CD8-positive, alpha-beta T cell (primary cell): ENCODE measurements at regions of chr6 and their contacts with region 1.

Region 1: DNA sequence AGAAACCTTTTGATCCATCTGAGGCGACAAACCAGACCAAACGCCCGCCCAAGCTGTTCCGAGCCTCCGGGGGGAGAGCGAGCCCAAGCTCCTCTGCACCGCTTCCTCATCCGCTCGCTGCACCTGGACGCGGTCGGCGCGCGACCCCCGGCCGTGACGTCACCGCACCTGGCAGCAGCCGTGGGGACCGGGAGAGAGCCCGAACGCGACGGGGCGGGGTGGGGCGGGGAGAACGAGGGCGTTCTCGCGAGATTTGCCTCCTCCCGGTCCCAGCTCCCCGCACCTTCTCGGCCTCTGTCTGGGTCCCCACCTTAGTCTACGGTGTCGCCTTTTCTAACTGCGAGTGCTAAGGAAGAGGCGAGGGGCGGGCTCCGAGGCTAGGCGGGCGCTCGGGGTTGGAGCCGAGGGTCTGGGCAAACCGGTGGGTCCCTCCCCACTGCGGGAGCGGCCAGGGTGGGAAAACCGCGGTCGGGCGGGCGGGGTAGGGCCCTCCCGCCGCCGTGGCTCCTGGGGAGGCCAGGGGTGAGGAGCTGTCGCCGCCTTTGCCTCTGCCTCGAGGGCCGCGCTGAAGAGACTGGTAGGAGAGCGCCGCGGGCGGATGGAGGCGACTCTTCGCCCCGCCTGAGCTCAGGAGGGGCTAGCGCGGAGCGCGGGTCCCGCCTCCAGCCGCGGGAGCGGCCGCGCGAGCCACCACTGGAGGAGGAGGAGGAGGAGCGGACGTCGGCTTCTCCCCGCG is at the start of gene CD2AP:
- DNase-seq: peak; percentile 86 to 97 (median 94)
- ATAC-seq: peak; percentile 82
- H3K4me3 ChIP-seq: peak within 1 kb of the TSS; percentile 68 to 76
- H3K4me3 Mint-ChIP-seq: peak within 1 kb of the TSS; percentile 97
- H3K27ac ChIP-seq: peak within 1 kb of the TSS; percentile 89 to 94
- H3K27ac Mint-ChIP-seq: peak within 1 kb of the TSS; percentile 96
- H3K4me1 ChIP-seq: peaks cover 24% of the 10 kb centered on the region
- H3K4me1 Mint-ChIP-seq: peaks cover 46% of the 10 kb centered on the region
- H3K27me3 ChIP-seq: no peaks in the 10 kb centered on the region
- H3K27me3 Mint-ChIP-seq: no peaks in the 10 kb centered on the region
- CTCF ChIP-seq: no peak
- total RNA-seq, gene CD2AP: 43.0 to 51.1 TPM

Region 2: DNA sequence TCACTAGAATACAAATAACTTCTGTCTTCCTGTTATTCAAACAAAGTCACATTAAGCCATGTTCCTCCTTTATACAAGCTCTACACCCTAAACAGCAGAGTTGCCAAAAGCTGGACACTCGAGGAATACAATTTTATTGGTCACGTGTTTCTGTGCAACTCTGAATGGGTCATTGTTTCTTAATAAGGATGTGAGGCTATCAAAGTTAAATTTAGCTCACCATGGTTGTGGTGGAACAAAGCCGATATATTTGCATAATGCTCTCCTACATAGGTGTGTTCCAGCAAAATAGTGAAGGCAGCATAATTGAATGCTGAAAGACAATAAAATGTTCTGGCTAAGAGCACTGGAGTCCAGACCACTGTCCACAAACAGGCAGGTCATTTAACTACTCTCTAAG is 36.9 kb before region 1 on chr6:
- CTCF ChIA-PET with region 1: no interaction called
- POLR2A ChIA-PET with region 1: no interaction called
- intact Hi-C with region 1: no loop called
- DNase-seq: no peak
- ATAC-seq: no peak
- H3K4me3 ChIP-seq: no peak overlapping the region
- H3K4me3 Mint-ChIP-seq: no peak overlapping the region
- H3K27ac ChIP-seq: no peak overlapping the region
- H3K27ac Mint-ChIP-seq: no peak overlapping the region
- H3K4me1 ChIP-seq: no peaks in the 10 kb centered on the region
- H3K4me1 Mint-ChIP-seq: no peaks in the 10 kb centered on the region
- H3K27me3 ChIP-seq: no peaks in the 10 kb centered on the region
- H3K27me3 Mint-ChIP-seq: no peaks in the 10 kb centered on the region
- CTCF ChIP-seq: no peak

Region 3: GRCh38 chr6:47519279-47519678 is 41.6 kb after region 1 on chr6:
- CTCF ChIA-PET with region 1: no interaction called
- POLR2A ChIA-PET with region 1: interaction called, 5 read pairs
- intact Hi-C with region 1: loop called in 1 of 2 experiments (anchors 5 kb)
- DNase-seq: no peak
- ATAC-seq: no peak
- H3K4me3 ChIP-seq: no peak overlapping the region
- H3K4me3 Mint-ChIP-seq: no peak overlapping the region
- H3K27ac ChIP-seq: no peak overlapping the region
- H3K27ac Mint-ChIP-seq: no peak overlapping the region
- H3K4me1 ChIP-seq: peaks cover 13% of the 10 kb centered on the region
- H3K4me1 Mint-ChIP-seq: peaks cover 70% of the 10 kb centered on the region
- H3K27me3 ChIP-seq: no peaks in the 10 kb centered on the region
- H3K27me3 Mint-ChIP-seq: no peaks in the 10 kb centered on the region
- CTCF ChIP-seq: no peak

Region 4: DNA sequence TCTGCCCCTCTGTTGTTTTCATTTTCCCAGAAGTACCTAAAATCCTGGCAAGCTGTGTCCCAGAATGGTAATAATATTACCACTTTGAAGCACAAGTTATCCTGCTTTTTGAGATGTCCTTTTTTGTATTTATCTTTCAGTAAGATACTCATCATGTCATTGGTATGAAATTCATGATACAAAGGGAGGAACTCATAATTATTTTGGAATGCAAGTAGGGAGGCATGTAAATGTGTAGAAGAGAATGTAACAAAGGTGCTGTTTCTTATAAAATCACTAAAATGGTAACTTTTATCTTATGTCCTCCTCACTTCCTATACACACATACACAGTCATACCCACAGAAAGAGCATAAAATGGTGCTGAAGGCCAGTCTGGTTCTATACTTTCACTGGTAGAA is 109.8 kb after region 1 on chr6:
- CTCF ChIA-PET with region 1: no interaction called
- POLR2A ChIA-PET with region 1: interaction called, 3 read pairs
- intact Hi-C with region 1: loop called in 1 of 2 experiments (anchors 5 kb)
- DNase-seq: no peak
- ATAC-seq: no peak
- H3K4me3 ChIP-seq: no peak overlapping the region
- H3K4me3 Mint-ChIP-seq: no peak overlapping the region
- H3K27ac ChIP-seq: no peak overlapping the region
- H3K27ac Mint-ChIP-seq: no peak overlapping the region
- H3K4me1 ChIP-seq: no peaks in the 10 kb centered on the region
- H3K4me1 Mint-ChIP-seq: no peaks in the 10 kb centered on the region
- H3K27me3 ChIP-seq: no peaks in the 10 kb centered on the region
- H3K27me3 Mint-ChIP-seq: no peaks in the 10 kb centered on the region
- CTCF ChIP-seq: no peak

Region 5: GRCh38 chr6:47859132-47859531 is 381.5 kb after region 1 on chr6:
- CTCF ChIA-PET with region 1: no interaction called
- POLR2A ChIA-PET with region 1: no interaction called
- intact Hi-C with region 1: no loop called
- DNase-seq: no peak
- ATAC-seq: no peak
- H3K4me3 ChIP-seq: no peak overlapping the region
- H3K4me3 Mint-ChIP-seq: no peak overlapping the region
- H3K27ac ChIP-seq: no peak overlapping the region
- H3K27ac Mint-ChIP-seq: no peak overlapping the region
- H3K4me1 ChIP-seq: no peaks in the 10 kb centered on the region
- H3K4me1 Mint-ChIP-seq: no peaks in the 10 kb centered on the region
- H3K27me3 ChIP-seq: no peaks in the 10 kb centered on the region
- H3K27me3 Mint-ChIP-seq: peaks cover 5% of the 10 kb centered on the region
- CTCF ChIP-seq: no peak

Region 6: DNA sequence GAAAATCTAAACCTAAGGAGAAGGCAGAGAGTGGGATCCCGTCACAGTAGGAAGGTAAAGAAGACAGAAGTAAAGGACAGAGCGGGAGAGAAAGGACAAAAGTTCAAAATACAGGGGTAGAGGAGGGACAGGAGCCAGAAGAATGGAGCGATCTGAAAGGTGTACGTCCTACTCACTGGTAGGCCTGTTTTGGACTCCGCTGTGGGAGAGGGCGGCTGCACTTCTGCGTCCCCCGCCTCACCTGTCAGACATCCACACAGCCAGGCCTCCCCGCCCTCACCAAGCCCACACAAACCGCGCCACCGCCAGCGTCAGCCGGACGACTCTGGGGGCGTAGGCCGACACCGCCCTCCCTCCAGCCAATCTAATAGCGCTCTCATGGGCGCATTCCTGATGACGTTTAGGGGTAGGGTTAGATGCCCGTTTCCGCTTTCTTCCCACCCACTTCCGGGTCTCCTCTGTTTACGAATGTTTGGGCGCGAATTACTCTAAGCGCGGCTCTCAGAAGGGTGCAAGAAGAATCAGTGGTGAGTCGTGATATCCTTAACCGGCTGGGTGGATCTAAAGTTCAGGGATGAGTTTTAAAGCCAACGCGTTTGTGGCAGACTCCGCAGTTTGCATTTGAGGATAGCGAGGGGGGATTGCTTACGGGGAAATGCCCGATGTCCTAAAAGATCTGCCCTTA is 1985.4 kb after region 1 on chr6 and contains the starts of genes CENPQ and MMUT:
- CTCF ChIA-PET with region 1: no interaction called
- POLR2A ChIA-PET with region 1: no interaction called
- intact Hi-C with region 1: loop called (anchors 1 to 5 kb)
- DNase-seq: peak; percentile 80 to 96 (median 88)
- ATAC-seq: peak; percentile 97
- H3K4me3 ChIP-seq: peak within 1 kb of the TSS; percentile 77 to 81
- H3K4me3 Mint-ChIP-seq: peak within 1 kb of the TSS; percentile 92
- H3K27ac ChIP-seq: peak within 1 kb of the TSS; percentile 79 to 84
- H3K27ac Mint-ChIP-seq: peak within 1 kb of the TSS; percentile 99
- H3K4me1 ChIP-seq: peaks cover 26% of the 10 kb centered on the region
- H3K4me1 Mint-ChIP-seq: peaks cover 58% of the 10 kb centered on the region
- H3K27me3 ChIP-seq: no peaks in the 10 kb centered on the region
- H3K27me3 Mint-ChIP-seq: no peaks in the 10 kb centered on the region
- CTCF ChIP-seq: no peak
- total RNA-seq, gene CENPQ: 0.35 to 0.58 TPM
- total RNA-seq, gene MMUT: 5.8 to 6.2 TPM